ENCODE measurements at regions of chr11 and their contacts with region 1.

Region 1: GRCh38 chr11:117072517-117073461 is 25.4 kb downstream of the SIK3 start:
- DNase-seq: peak; percentile 98
- ATAC-seq: peak; percentile 70
- H3K4me3 ChIP-seq: peak overlapping the region; percentile 0; the same call in 1 of the 2 replicates
- H3K27ac ChIP-seq: peak overlapping the region; percentile 55
- H3K4me1 ChIP-seq: peaks cover 55% of the 10 kb centered on the region
- H3K27me3 ChIP-seq: no peaks in the 10 kb centered on the region
- CTCF ChIP-seq: no peak

Region 2: GRCh38 chr11:116715383-116715782 is 357.4 kb before region 1 on chr11:
- CTCF ChIA-PET with region 1: no interaction called
- POLR2A ChIA-PET with region 1: no interaction called
- intact Hi-C with region 1: no loop called
- DNase-seq: no peak
- ATAC-seq: no peak
- H3K4me3 ChIP-seq: no peak overlapping the region
- H3K27ac ChIP-seq: no peak overlapping the region
- H3K4me1 ChIP-seq: no peaks in the 10 kb centered on the region
- H3K27me3 ChIP-seq: peaks cover 6% of the 10 kb centered on the region; the same call in 1 of the 2 replicates
- CTCF ChIP-seq: peak; percentile 41

Region 3: GRCh38 chr11:116813781-116814471 is 258.9 kb before region 1 on chr11:
- CTCF ChIA-PET with region 1: no interaction called
- POLR2A ChIA-PET with region 1: no interaction called
- intact Hi-C with region 1: no loop called
- DNase-seq: no peak
- ATAC-seq: no peak
- H3K4me3 ChIP-seq: no peak overlapping the region
- H3K27ac ChIP-seq: no peak overlapping the region
- H3K4me1 ChIP-seq: peaks cover 2% of the 10 kb centered on the region; the same call in 1 of the 2 replicates
- H3K27me3 ChIP-seq: no peaks in the 10 kb centered on the region
- CTCF ChIP-seq: no peak

Region 4: DNA sequence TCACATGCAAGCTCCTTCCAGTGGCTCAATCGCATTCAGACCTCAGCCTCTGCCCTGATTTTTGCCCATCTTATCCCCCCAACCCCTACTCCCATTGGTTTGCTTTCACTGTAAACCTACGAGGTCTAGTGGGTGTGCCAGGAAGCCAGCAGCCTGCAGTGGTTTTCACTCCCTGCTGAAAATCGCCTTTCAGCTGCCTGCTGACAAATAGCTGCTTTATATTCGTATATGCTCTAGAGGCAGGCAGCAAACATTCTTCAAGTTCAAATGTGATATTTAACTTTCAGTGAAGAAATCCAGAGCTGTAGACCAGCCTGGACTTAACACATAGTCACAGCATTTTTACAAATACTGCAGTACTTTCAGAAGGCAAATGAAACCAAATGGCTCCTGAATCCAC is 142.6 kb before region 1 on chr11:
- CTCF ChIA-PET with region 1: no interaction called
- POLR2A ChIA-PET with region 1: no interaction called
- intact Hi-C with region 1: no loop called
- DNase-seq: no peak
- ATAC-seq: no peak
- H3K4me3 ChIP-seq: no peak overlapping the region
- H3K27ac ChIP-seq: no peak overlapping the region
- H3K4me1 ChIP-seq: peaks cover 23% of the 10 kb centered on the region
- H3K27me3 ChIP-seq: no peaks in the 10 kb centered on the region
- CTCF ChIP-seq: no peak

Region 5: GRCh38 chr11:117010808-117011540 is 61.8 kb before region 1 on chr11:
- CTCF ChIA-PET with region 1: no interaction called
- POLR2A ChIA-PET with region 1: no interaction called
- intact Hi-C with region 1: loop called (anchors 2 kb)
- DNase-seq: peak; percentile 98
- ATAC-seq: peak; percentile 97
- H3K4me3 ChIP-seq: no peak overlapping the region
- H3K27ac ChIP-seq: peak overlapping the region; percentile 70
- H3K4me1 ChIP-seq: peaks cover 21% of the 10 kb centered on the region
- H3K27me3 ChIP-seq: no peaks in the 10 kb centered on the region
- CTCF ChIP-seq: no peak

Region 6: GRCh38 chr11:117019871-117020270 is 52.9 kb before region 1 on chr11:
- CTCF ChIA-PET with region 1: no interaction called
- POLR2A ChIA-PET with region 1: no interaction called
- intact Hi-C with region 1: loop called (anchors 1 kb)
- DNase-seq: no peak
- ATAC-seq: no peak
- H3K4me3 ChIP-seq: no peak overlapping the region
- H3K27ac ChIP-seq: peak overlapping the region; percentile 63
- H3K4me1 ChIP-seq: peaks cover 24% of the 10 kb centered on the region
- H3K27me3 ChIP-seq: no peaks in the 10 kb centered on the region
- CTCF ChIP-seq: no peak

Region 7: DNA sequence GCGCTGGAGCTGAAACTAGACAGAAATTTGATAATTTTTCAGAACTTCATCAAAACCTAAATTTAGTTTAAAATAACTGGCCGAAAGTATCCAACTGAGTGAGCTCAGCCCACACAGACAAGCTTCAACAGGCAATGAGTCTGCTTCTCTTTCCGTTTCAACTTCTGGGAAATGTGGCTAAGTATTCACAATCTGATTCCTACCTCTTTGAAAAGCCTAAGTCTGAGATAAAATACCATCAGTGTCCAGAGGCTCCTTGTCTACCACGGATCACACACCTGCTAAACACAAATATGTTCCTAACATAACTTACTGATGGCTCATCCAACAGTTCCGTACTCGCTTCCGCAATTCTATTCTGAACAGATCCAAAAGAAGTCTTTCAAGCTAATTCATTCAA is 16.9 kb after region 1 on chr11:
- CTCF ChIA-PET with region 1: interaction called, 4 read pairs
- POLR2A ChIA-PET with region 1: interaction called, 3 read pairs
- intact Hi-C with region 1: loop called (anchors 2 kb)
- DNase-seq: peak; percentile 92
- ATAC-seq: peak; percentile 96
- H3K4me3 ChIP-seq: peak overlapping the region; percentile 49
- H3K27ac ChIP-seq: peak overlapping the region; percentile 49
- H3K4me1 ChIP-seq: peaks cover 27% of the 10 kb centered on the region
- H3K27me3 ChIP-seq: no peaks in the 10 kb centered on the region
- CTCF ChIP-seq: no peak

Region 8: DNA sequence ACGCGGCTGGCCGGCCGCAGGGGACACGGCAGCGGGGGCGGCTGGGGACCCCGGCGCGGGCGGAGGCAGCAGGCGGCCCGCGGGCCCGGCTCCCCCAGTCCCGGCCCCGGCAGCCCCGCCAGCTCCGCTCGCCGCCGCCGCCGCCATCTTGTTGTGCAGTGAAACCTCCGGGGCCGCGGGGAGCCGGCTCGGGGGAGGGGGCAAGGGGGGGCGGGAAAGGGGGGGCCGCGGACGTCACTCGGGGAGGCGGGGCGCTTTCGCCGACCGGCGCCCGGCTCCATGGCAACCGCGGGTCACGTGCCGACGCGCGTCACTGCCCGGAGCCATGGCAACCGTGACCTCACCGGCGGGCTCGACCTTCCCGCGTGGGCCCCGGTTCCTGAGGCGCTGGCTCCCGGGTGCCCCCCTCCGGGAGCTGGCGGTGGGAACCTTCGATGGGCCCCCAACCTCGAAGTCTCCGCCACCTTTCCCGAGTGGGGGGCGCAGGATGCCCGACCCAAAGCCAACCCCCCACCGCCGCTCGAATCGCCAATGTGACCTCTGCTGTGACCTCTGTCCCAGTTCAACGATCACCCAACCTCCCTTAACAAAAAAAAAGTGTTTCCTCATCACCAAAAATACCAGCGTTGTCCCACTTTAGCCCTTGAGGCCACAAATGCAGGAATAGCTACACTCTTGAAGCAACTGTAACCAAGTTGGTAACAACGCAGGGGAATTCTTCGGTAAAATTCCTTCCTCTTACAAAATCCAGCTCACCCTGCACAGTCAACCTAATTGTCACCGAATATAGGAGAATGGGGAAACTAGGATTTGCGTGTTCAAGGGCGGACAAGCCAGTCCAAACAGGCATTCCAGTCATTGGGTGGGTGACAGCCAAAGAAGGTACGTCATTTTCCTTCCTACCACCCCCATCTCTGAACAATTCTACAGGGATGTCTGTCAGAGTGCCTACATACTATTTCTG is 25.8 kb after region 1 on chr11 and contains the start of gene SIK3:
- CTCF ChIA-PET with region 1: no interaction called
- POLR2A ChIA-PET with region 1: no interaction called
- intact Hi-C with region 1: loop called (anchors 2 kb)
- DNase-seq: peak; percentile 92
- ATAC-seq: peak; percentile 80
- H3K4me3 ChIP-seq: peak within 1 kb of the TSS; percentile 95
- H3K27ac ChIP-seq: peak within 1 kb of the TSS; percentile 90
- H3K4me1 ChIP-seq: peaks cover 41% of the 10 kb centered on the region
- H3K27me3 ChIP-seq: no peaks in the 10 kb centered on the region
- CTCF ChIP-seq: no peak; the same call in 1 of the 2 replicates
- total RNA-seq, gene SIK3: 14.5 and 17.4 TPM in 2 replicates